ENCODE measurements at regions of chr16 and their contacts with region 1.

Region 1: GRCh38 chr16:16578701-16579100 is 199.8 kb downstream of the NPIPA7 start:
- DNase-seq: no peak
- H3K4me3 ChIP-seq: no peak overlapping the region
- H3K27ac ChIP-seq: no peak overlapping the region
- H3K4me1 ChIP-seq: no peaks in the 10 kb centered on the region
- H3K27me3 ChIP-seq: no peaks in the 10 kb centered on the region

Region 2: DNA sequence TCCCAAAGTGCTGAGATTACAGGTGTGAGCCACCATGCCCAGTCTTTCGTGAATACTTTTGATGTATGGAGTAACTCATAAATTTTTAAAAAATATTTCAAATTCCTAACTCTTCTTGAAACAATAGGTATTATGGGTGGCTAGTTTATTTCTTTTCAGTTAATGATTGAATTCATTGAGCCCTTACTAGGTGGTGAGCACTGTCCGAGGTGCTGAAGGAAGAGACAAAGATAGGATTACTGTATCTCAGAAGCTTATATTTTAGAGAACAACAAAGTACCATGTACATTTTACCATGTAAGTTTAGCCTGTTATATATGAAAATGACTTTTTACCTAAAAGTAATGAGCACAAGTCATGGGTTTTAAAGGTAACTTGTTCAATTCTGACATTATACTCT is 218.5 kb after region 1 on chr16:
- in situ Hi-C with region 1: loop called (anchors 25 kb)
- DNase-seq: no peak
- H3K4me3 ChIP-seq: no peak overlapping the region
- H3K27ac ChIP-seq: no peak overlapping the region
- H3K4me1 ChIP-seq: no peaks in the 10 kb centered on the region
- H3K27me3 ChIP-seq: no peaks in the 10 kb centered on the region

Measured in GM23248 (cell line).